Activated naive CD8-positive, alpha-beta T cell treated with anti-CD3 and anti-CD28 coated beads, Interleukin-2, amount 10 ng/mL, durations not matched to agents 7 days and 5 days (primary cell): ENCODE measurements at regions of chr2 and their contacts with region 1.

Region 1: DNA sequence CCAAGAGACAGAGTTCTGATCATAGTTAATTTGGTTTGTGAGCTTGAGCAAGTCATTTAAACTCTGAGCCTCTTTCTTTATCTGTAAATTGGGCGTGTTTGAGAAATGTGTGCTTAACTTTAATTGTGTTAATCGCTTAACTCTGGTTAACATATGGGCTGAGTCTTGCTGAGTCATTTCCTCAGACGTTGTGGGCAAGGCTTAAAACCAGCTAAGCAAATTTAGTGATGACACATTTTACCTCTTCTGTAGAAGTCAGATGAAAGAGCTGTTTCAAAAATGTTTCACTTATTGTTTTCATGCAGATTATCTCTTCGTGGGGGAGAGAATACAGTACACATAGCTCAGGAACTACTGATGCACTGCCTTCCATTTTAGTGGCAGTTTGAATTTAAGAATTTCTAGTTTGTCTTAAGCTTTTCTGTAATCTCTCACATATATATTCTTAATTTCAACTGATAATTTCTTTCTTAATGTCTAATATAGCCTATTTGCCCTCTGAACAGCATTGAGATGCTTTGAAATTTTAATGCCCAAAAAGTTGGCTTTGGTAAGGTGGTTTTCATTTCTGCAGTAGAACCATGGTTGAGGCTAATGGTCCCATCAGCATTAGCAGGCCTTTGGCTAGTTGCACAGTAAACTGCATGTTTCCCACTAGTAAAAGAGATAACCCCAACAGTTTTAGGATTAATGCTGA is 34.9 kb downstream of the RAB10 start:
- DNase-seq: no peak
- ATAC-seq: peak; percentile 89
- H3K4me3 Mint-ChIP-seq: peak overlapping the region; percentile 60
- H3K27ac Mint-ChIP-seq: peak overlapping the region; percentile 79
- H3K4me1 Mint-ChIP-seq: peaks cover 36% of the 10 kb centered on the region
- H3K27me3 Mint-ChIP-seq: no peaks in the 10 kb centered on the region

Region 2: GRCh38 chr2:26033818-26034636 is 34.7 kb before region 1 on chr2 and contains the start of gene RAB10:
- POLR2A ChIA-PET with region 1: interaction called, 18 read pairs
- DNase-seq: peak; percentile 100
- ATAC-seq: peak; percentile 95
- H3K4me3 Mint-ChIP-seq: peak within 1 kb of the TSS; percentile 97
- H3K27ac Mint-ChIP-seq: peak within 1 kb of the TSS; percentile 94
- H3K4me1 Mint-ChIP-seq: peaks cover 28% of the 10 kb centered on the region
- H3K27me3 Mint-ChIP-seq: no peaks in the 10 kb centered on the region
- total RNA-seq, gene RAB10: 88.0 to 89.7 TPM

Region 3: GRCh38 chr2:26103752-26104151 is 35.0 kb after region 1 on chr2:
- POLR2A ChIA-PET with region 1: no interaction called
- DNase-seq: no peak
- ATAC-seq: no peak
- H3K4me3 Mint-ChIP-seq: no peak overlapping the region
- H3K27ac Mint-ChIP-seq: no peak overlapping the region
- H3K4me1 Mint-ChIP-seq: peaks cover 3% of the 10 kb centered on the region
- H3K27me3 Mint-ChIP-seq: no peaks in the 10 kb centered on the region